Adrenal gland (tissue), 19 donors: ENCODE measurements at regions of chr11 and their contacts with region 1.

Region 1: GRCh38 chr11:85941380-85941973 is 86.3 kb downstream of the CCDC83 start:
- DNase-seq: peak; percentile 61 to 85 (median 76)
- H3K4me3 ChIP-seq: no peak overlapping the region
- H3K27ac ChIP-seq: no peak overlapping the region
- H3K4me1 ChIP-seq: peaks cover 0 to 4% of the 10 kb centered on the region in 2 donors
- H3K27me3 ChIP-seq: no peaks in the 10 kb centered on the region
- CTCF ChIP-seq: peak; percentile 65 to 86 (median 82)
- POLR2A ChIP-seq: no peak

Region 2: GRCh38 chr11:85854557-85855340 is 86.7 kb before region 1 on chr11:
- intact Hi-C with region 1: loop called in 1 of 2 experiments (anchors 5 kb)
- DNase-seq: peak; percentile 87 to 95 (median 92)
- H3K4me3 ChIP-seq: peak overlapping the region; percentile 12 to 51 (median 35)
- H3K27ac ChIP-seq: peak overlapping the region; percentile 46 to 87 (median 78)
- H3K4me1 ChIP-seq: peaks cover 5 to 6% of the 10 kb centered on the region in 2 donors
- H3K27me3 ChIP-seq: no peaks in the 10 kb centered on the region
- CTCF ChIP-seq: peak; percentile 66 to 99 (median 94)
- POLR2A ChIP-seq: peak in 1 of 2 donors; percentile 74

Region 3: DNA sequence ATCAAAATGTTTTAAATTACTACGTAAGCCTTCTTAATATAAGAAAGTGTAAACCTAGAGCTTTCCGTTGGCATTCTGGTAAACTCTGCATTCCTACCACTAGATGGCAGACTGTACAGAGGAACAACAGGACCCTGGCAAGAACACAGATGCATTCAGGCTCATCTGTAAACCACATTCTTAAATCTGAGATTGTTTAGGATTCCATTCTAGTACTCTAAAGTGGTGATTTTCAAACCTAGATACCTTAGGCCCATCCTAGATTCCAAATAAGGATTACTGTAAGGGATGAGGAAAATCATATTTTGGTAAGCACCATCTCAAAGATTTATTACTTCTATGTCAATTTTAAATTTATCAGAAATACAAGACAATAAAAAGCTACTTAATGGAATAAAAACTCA is 100.5 kb after region 1 on chr11:
- intact Hi-C with region 1: loop called in 1 of 2 experiments (anchors 10 kb)
- DNase-seq: peak; percentile 56 to 85 (median 71)
- H3K4me3 ChIP-seq: peak overlapping the region in 1 of 4 donors; percentile 31
- H3K27ac ChIP-seq: no peak overlapping the region
- H3K4me1 ChIP-seq: peaks cover 4 to 62% of the 10 kb centered on the region in 2 donors
- H3K27me3 ChIP-seq: no peaks in the 10 kb centered on the region
- CTCF ChIP-seq: peak; percentile 78 to 99 (median 94)
- POLR2A ChIP-seq: no peak

Region 4: DNA sequence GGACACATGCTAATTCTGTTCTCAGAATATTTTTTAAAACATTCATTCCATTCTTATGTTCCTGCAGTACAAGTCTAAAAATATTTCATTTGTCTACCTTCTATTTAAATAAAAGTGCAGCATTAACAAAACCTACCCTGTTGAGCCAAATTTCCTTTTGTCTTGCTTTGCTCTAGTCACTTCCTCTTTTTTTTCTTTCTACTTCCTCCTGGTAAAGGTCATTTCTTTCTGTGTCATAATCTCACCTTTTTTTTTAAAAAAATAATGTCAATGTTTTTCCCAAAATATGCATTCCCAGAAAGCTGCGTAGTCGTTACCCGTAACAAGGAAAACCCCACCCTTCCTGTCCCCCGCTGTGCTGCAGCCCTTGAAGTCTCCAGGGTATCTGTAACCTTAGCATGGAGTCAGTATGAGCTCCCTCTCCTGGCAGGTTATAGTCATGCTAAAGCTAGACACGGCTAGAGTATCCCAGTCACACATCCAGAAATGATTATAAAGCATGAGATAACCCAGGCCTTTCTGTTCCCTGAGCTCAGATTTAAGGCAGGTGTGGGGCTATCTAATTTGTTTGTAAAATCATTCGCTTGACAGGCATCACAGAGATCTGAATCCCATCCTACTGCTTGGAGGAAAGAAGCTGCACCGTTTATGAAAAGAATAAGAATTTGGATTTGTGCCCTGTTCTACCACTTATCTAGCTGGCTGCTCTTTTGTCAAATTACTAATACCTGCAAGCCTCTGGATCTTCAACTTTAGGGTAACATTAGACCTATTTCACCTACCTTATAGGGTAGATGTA is 252.0 kb after region 1 on chr11:
- intact Hi-C with region 1: loop called in 1 of 2 experiments (anchors 10 kb)
- DNase-seq: peak; percentile 64 to 88 (median 79)
- H3K4me3 ChIP-seq: peak overlapping the region in 1 of 4 donors; percentile 27
- H3K27ac ChIP-seq: peak overlapping the region in 2 of 5 donors; percentile 54 to 77
- H3K4me1 ChIP-seq: peaks cover 0 to 18% of the 10 kb centered on the region in 2 donors
- H3K27me3 ChIP-seq: no peaks in the 10 kb centered on the region
- CTCF ChIP-seq: peak; percentile 55 to 87 (median 76)
- POLR2A ChIP-seq: no peak

Region 5: DNA sequence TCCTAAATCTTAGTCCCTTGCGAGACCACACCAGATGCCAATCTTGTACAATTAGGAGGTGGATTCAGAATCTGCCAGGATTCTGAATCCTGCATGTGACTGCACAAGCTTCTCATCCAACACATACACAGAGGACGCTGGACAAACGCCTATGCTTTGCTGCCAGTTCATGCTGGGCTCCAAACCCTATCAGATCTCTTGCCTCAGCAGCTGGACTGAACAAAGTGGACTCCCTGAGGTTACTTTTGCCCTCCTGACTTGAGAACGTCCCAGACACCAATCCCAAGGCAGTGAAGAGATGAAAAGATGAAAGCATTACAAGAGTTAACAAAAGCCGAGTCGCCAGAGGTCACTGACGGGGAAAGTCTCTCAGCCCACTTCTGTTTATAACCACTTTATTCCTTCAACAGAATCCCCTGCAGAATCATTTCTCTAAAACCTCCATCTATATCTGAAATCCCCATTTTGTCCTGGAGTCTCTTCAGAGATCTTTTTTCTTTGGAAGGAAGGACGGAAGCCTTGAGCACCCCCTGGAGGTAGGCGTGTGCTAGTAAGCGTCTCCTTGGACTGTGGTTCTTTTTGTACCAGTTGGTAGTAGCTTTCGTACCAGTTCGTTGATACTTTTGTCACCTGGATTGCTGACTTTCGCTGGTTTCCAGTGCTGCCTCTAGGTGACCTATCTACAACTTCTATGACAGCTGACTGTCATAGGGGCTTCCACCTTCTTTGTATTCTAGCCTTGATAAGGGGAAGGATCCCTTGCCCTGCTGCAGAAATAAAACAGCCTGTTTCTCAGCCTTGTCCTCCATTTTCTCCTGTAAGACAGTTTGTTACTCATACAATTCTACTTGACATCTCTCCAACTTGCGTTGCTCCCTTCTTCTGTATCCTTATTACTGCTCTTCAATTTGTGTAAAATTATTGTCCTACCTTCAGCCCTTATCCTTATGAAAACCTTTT is 276.9 kb after region 1 on chr11:
- intact Hi-C with region 1: loop called in 1 of 2 experiments (anchors 5 kb)
- DNase-seq: peak; percentile 65 to 85 (median 72)
- H3K4me3 ChIP-seq: peak overlapping the region in 1 of 4 donors; percentile 39
- H3K27ac ChIP-seq: no peak overlapping the region
- H3K4me1 ChIP-seq: peaks cover 0 to 8% of the 10 kb centered on the region in 2 donors
- H3K27me3 ChIP-seq: no peaks in the 10 kb centered on the region
- CTCF ChIP-seq: peak; percentile 73 to 91 (median 81)
- POLR2A ChIP-seq: no peak

Region 6: GRCh38 chr11:86291466-86292262 is 350.2 kb after region 1 on chr11:
- intact Hi-C with region 1: loop called in 1 of 2 experiments (anchors 10 kb)
- DNase-seq: peak; percentile 41 to 79 (median 59)
- H3K4me3 ChIP-seq: no peak overlapping the region
- H3K27ac ChIP-seq: no peak overlapping the region
- H3K4me1 ChIP-seq: peaks cover 0 to 7% of the 10 kb centered on the region in 2 donors
- H3K27me3 ChIP-seq: no peaks in the 10 kb centered on the region
- CTCF ChIP-seq: peak; percentile 36 to 78 (median 61)
- POLR2A ChIP-seq: no peak